ENCODE measurements at regions of chr22 and their contacts with region 1.

Region 1: GRCh38 chr22:37676736-37677492 is 1.5 kb downstream of the LGALS1 start:
- DNase-seq: peak; percentile 83 to 89 (median 85)
- ATAC-seq: peak; percentile 48 to 67 (median 55)
- H3K4me3 ChIP-seq: peak overlapping the region; percentile 41 to 62 (median 58)
- H3K27ac ChIP-seq: peak overlapping the region; percentile 54 to 84 (median 84)
- H3K4me1 ChIP-seq: peaks cover 0 to 30% (median 10%) of the 10 kb centered on the region in 4 donors
- H3K27me3 ChIP-seq: no peaks in the 10 kb centered on the region
- CTCF ChIP-seq: no peak
- POLR2A ChIP-seq: peak; percentile 52

Region 2: GRCh38 chr22:37581504-37581903 is 95.4 kb before region 1 on chr22:
- intact Hi-C with region 1: no loop called
- DNase-seq: peak; percentile 78 to 91 (median 80)
- ATAC-seq: peak; percentile 81 to 96 (median 89)
- H3K4me3 ChIP-seq: no peak overlapping the region
- H3K27ac ChIP-seq: peak overlapping the region in 1 of 3 donors; percentile 11
- H3K4me1 ChIP-seq: peaks cover 0 to 21% (median 2%) of the 10 kb centered on the region in 4 donors
- H3K27me3 ChIP-seq: no peaks in the 10 kb centered on the region
- CTCF ChIP-seq: no peak
- POLR2A ChIP-seq: no peak

Region 3: GRCh38 chr22:37623075-37624016 is 53.6 kb before region 1 on chr22:
- intact Hi-C with region 1: loop called in 1 of 2 experiments (anchors 10 kb)
- DNase-seq: peak in 1 of 3 donors; percentile 58
- ATAC-seq: peak; percentile 37 to 52 (median 50)
- H3K4me3 ChIP-seq: no peak overlapping the region
- H3K27ac ChIP-seq: no peak overlapping the region
- H3K4me1 ChIP-seq: peaks cover 2 to 32% (median 21%) of the 10 kb centered on the region in 4 donors
- H3K27me3 ChIP-seq: no peaks in the 10 kb centered on the region
- CTCF ChIP-seq: peak; percentile 50 to 87 (median 82)
- POLR2A ChIP-seq: no peak

Region 4: GRCh38 chr22:37643225-37643847 is 33.6 kb before region 1 on chr22:
- intact Hi-C with region 1: loop called in 1 of 2 experiments (anchors 5 kb)
- DNase-seq: peak; percentile 82 to 88 (median 85)
- ATAC-seq: peak; percentile 81 to 87 (median 85)
- H3K4me3 ChIP-seq: no peak overlapping the region
- H3K27ac ChIP-seq: no peak overlapping the region
- H3K4me1 ChIP-seq: peaks cover 0 to 10% (median 0%) of the 10 kb centered on the region in 4 donors
- H3K27me3 ChIP-seq: no peaks in the 10 kb centered on the region
- CTCF ChIP-seq: peak; percentile 89 to 95 (median 93)
- POLR2A ChIP-seq: no peak